Left ventricle myocardium inferior (tissue), 1 donor: ENCODE measurements at regions of chr14 and their contacts with region 1.

Region 1: DNA sequence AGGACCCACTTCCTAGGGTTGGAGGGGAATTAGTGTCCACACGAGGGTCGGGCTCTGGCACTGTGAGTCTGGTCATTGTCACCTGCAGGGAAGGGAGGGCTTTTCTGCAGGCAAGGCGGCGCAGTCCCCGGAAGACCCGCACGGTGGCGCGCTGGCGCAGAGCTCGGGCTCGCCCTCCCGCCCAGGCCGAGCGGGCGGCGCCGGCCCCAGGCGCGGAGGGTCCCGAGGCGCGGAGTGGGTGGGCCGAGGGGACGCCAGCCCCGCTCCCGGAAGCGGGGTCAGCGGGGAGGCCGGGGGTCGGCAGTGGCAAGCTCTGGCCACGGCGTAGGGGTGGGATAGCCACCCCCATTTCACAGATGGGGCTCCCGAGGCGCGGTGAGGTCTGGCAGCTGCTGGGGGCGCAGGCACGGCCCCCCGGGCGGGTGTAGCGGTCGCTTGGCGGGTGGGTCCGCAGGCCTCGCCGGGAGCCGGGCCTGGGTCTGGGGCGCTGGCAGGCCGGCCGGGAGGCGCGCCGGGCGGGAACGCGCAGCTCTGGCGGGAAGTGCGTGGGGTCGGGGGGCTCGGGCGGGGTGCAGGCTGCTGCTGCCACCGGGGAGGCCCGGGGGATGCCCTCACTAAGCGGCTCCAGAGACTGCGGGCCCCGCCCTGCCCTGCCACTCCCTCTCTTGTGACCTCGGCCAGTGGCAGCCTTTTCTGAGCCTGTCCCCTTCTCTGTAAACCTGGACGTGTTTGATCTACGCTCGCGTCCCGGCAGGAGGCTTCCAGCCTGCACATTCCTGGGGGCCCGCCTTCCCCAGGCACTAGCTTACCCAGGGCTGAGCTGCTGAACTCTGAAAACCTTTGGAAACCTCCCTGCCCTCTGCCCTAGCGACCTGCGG is 46.1 kb downstream of the CYP46A1 start:
- DNase-seq: peak; percentile 72
- H3K4me3 ChIP-seq: peak overlapping the region; percentile 70
- H3K27ac ChIP-seq: peak overlapping the region; percentile 94
- H3K4me1 ChIP-seq: peaks cover 58% of the 10 kb centered on the region
- H3K27me3 ChIP-seq: peaks cover 11% of the 10 kb centered on the region
- CTCF ChIP-seq: peak; percentile 98

Region 2: DNA sequence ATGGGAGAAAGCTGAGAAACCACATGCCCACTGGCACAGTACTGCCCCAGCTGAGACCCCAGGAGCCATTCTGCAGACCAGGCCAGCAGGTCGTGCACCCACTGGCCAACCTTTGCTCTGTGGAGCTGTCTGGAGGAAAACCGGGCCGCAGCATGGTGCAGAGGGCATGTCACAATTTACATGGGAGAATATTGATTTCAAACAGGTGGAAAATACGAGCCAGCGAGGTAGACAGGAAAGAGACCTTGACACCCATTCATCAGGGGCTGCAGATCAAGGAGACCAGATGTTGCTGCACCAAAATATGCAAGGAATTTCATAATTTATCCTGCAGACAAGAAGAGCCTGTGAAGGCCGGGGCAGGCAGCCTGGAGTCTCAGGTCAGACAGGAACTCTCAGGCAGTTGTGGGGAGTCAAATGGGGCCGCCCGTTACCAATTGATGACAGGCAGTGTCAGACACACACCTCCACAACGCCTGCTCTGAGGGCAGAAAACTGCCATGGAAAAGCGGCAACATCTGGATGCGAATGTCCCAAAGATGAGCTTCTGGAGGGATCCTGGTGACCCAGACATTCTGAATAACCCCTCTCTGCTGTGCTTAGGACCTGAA is 383.7 kb before region 1 on chr14:
- intact Hi-C with region 1: no loop called
- DNase-seq: no peak
- H3K4me3 ChIP-seq: no peak overlapping the region
- H3K27ac ChIP-seq: no peak overlapping the region
- H3K4me1 ChIP-seq: no peaks in the 10 kb centered on the region
- H3K27me3 ChIP-seq: peaks cover 14% of the 10 kb centered on the region
- CTCF ChIP-seq: no peak

Region 3: GRCh38 chr14:99560922-99561682 is 169.1 kb before region 1 on chr14:
- intact Hi-C with region 1: no loop called
- DNase-seq: peak; percentile 64
- H3K4me3 ChIP-seq: no peak overlapping the region
- H3K27ac ChIP-seq: peak overlapping the region; percentile 86
- H3K4me1 ChIP-seq: peaks cover 62% of the 10 kb centered on the region
- H3K27me3 ChIP-seq: no peaks in the 10 kb centered on the region
- CTCF ChIP-seq: no peak

Region 4: DNA sequence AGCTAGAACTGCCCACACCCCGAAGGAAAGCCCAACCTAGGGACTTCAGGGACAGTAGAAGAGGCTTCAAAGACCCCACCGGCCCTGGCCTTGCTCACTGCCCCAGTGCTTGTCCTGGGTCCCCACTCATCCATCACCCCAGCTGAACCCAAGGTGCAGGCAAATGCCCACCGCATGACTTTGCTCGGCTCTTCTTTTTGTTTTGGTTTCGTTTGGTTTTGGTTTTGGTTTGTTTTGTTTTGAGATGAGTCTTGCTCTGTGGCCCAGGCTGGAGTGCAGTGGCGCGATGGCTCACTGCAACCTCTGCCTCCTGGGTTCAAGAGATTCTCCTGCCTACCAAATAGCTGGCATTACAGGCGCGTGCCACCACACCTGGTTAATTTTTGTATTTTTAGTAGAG is 135.2 kb before region 1 on chr14:
- intact Hi-C with region 1: no loop called
- DNase-seq: no peak
- H3K4me3 ChIP-seq: no peak overlapping the region
- H3K27ac ChIP-seq: no peak overlapping the region
- H3K4me1 ChIP-seq: peaks cover 100% of the 10 kb centered on the region
- H3K27me3 ChIP-seq: no peaks in the 10 kb centered on the region
- CTCF ChIP-seq: no peak

Region 5: DNA sequence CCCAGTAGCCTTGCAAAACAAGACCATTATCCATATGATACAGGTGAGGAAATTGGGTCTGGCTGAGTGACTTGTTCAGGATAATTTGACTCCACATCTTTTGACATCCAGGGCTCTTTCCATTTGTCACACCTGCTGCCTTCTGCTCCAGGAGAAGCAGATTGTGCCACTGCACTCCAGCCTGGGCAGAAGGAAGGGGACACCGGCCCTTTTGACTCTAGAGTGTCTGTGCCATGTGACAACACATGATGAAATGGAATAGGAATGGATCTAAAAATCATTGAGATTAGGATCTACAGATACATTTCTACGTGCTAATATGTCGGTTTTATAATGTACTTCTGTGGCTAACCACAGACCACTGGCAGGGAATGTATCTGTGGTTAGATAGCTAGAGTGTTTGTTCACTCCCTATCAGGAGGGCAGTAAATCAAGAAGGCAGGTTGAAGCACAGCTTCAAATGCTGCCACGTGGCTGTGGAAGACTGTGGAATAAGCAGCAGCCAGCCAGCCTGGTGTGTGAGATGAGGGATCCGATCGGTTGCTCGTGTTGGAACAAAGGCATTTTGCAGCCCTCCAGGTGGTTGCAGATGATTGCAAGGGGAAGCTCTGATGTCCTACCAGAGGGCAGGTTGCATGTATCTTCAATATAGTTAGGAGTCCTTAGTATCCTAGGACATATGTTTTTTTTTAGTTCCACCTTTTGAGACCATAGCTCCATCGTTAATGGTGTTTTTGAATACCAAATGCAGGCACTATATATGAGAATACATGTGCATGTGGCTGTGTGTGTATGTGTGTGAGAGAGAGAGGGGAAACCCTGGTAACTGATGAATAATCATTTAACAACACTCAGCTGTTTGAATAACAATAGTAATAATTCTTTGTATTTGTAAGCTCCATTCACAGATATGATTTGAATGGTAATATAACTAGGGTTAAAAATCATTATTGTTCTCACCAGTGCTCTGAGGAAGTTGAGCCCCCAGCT is 91.6 kb after region 1 on chr14:
- intact Hi-C with region 1: no loop called
- DNase-seq: no peak
- H3K4me3 ChIP-seq: no peak overlapping the region
- H3K27ac ChIP-seq: no peak overlapping the region
- H3K4me1 ChIP-seq: peaks cover 24% of the 10 kb centered on the region
- H3K27me3 ChIP-seq: no peaks in the 10 kb centered on the region
- CTCF ChIP-seq: no peak

Region 6: GRCh38 chr14:99884834-99885648 is 154.8 kb after region 1 on chr14:
- intact Hi-C with region 1: loop called (anchors 2 kb)
- DNase-seq: no peak
- H3K4me3 ChIP-seq: no peak overlapping the region
- H3K27ac ChIP-seq: no peak overlapping the region
- H3K4me1 ChIP-seq: peaks cover 2% of the 10 kb centered on the region
- H3K27me3 ChIP-seq: no peaks in the 10 kb centered on the region
- CTCF ChIP-seq: peak; percentile 83